Heart right ventricle (tissue), 16 donors: ENCODE measurements at regions of chr17 and their contacts with region 1.

Region 1: GRCh38 chr17:56653877-56654276 is 60.4 kb downstream of the NOG start:
- DNase-seq: no peak
- ATAC-seq: no peak
- H3K4me3 ChIP-seq: no peak overlapping the region
- H3K27ac ChIP-seq: no peak overlapping the region
- H3K4me1 ChIP-seq: no peaks in the 10 kb centered on the region
- H3K27me3 ChIP-seq: peaks cover 0 to 13% (median 6%) of the 10 kb centered on the region in 7 donors
- CTCF ChIP-seq: peak in 6 of 9 donors; percentile 22 to 44 (median 32)

Region 2: GRCh38 chr17:56581635-56582627 is 71.9 kb before region 1 on chr17:
- intact Hi-C with region 1: loop called in 1 of 10 experiments (anchors 2 kb)
- DNase-seq: no peak
- ATAC-seq: no peak
- H3K4me3 ChIP-seq: no peak overlapping the region
- H3K27ac ChIP-seq: no peak overlapping the region
- H3K4me1 ChIP-seq: peaks cover 0 to 12% (median 0%) of the 10 kb centered on the region in 9 donors
- H3K27me3 ChIP-seq: peaks cover 0 to 41% (median 32%) of the 10 kb centered on the region in 7 donors
- CTCF ChIP-seq: no peak

Region 3: GRCh38 chr17:57401556-57402488 is 747.9 kb after region 1 on chr17:
- intact Hi-C with region 1: no loop called
- DNase-seq: no peak
- ATAC-seq: peak in 5 of 8 donors; percentile 10 to 53 (median 19)
- H3K4me3 ChIP-seq: no peak overlapping the region
- H3K27ac ChIP-seq: no peak overlapping the region
- H3K4me1 ChIP-seq: peaks cover 2 to 53% (median 36%) of the 10 kb centered on the region in 9 donors
- H3K27me3 ChIP-seq: no peaks in the 10 kb centered on the region
- CTCF ChIP-seq: peak in 2 of 9 donors; percentile 12 to 22